Pancreas (tissue), 10 donors: ENCODE measurements at regions of chr10 and their contacts with region 1.

Region 1: DNA sequence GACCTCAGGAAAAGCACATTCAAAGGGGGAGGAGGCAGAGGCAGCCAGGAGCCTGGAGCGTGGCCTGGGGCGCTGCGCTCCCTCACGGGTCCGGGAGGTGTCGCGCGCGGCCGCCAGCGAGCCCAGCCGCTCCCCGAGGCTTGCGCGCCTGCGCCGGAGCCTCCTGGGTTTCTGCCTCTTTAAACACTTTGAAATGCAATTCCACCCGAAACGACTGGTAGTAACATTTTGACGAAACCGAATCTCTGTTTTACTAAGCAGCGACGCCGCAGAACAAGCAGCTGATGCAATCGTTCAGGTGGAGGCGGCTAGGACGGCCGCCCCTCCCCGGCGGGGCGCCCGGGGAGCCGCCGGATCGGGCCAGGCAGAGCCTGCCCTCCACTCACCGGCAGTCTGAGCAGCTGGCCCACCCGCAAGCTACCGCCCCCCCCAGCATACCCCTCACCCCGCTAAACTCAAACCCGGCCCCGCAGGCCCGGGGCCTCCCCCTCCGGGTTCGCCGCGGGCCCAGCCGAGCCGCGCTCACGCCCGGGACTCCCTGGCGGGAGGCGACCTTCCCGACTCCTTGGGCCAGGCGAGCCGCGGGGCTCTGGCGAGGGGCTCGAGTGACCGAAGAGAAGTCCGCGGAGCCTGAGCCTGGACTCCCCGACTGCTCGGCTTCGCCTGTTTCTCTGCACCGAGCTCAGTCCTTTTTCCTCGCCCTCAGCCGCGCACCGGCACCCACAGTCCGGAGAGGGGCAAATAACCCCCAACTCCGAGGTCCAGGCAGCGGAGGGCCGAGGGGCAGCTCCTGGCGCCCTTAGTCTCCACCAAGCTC is 3.2 kb downstream of the MKX start:
- DNase-seq: peak; percentile 72 to 93 (median 88)
- ATAC-seq: peak; percentile 91 to 95 (median 92)
- H3K4me3 ChIP-seq: peak overlapping the region; percentile 39 to 76 (median 55)
- H3K27ac ChIP-seq: peak overlapping the region in 2 of 4 donors; percentile 45 to 67
- H3K4me1 ChIP-seq: peaks cover 4 to 25% (median 8%) of the 10 kb centered on the region in 3 donors
- H3K27me3 ChIP-seq: peaks cover 4 to 30% (median 8%) of the 10 kb centered on the region in 4 donors
- CTCF ChIP-seq: peak; percentile 75 to 88 (median 80)

Region 2: GRCh38 chr10:27986821-27987220 is 244.4 kb after region 1 on chr10:
- intact Hi-C with region 1: no loop called
- DNase-seq: no peak
- ATAC-seq: no peak
- H3K4me3 ChIP-seq: no peak overlapping the region
- H3K27ac ChIP-seq: no peak overlapping the region
- H3K4me1 ChIP-seq: no peaks in the 10 kb centered on the region
- H3K27me3 ChIP-seq: no peaks in the 10 kb centered on the region
- CTCF ChIP-seq: no peak

Region 3: DNA sequence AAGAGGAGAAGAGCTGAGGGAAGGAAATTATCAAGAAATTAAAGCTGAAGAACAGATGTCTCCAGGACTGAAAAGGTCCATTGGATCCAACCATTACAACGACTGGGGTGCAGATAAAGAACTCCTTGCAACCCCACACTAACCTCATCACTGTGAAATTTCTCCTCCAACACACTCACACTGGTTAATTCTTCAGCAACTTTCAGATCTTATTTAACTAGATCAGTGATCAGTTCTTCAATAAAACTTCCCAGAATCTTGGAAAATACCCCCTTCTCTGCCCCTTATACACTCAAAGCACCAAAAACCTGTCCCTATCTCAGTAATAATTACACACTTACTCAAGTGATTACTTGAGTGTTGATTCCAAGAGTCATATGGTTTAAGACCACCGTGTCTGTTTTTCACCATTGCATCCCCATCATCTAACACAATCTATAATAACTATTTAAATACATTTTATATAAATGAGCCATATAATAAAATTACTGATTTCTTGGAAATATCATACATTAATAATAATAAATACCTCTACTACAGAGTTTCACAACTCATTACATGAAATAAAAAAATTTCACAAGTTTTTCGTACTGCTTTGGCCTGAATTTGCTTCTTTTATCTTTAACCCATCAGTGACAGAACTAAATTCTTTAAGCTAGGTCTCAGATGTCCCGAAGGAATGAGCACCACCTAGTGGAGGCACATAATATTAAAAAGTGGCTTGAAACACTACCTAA is 436.8 kb after region 1 on chr10:
- intact Hi-C with region 1: loop called in 1 of 3 experiments (anchors 10 kb)
- DNase-seq: peak in 1 of 6 donors; percentile 19
- ATAC-seq: peak in 3 of 4 donors; percentile 83 to 89 (median 85)
- H3K4me3 ChIP-seq: no peak overlapping the region
- H3K27ac ChIP-seq: no peak overlapping the region
- H3K4me1 ChIP-seq: peaks cover 0 to 7% (median 0%) of the 10 kb centered on the region in 3 donors
- H3K27me3 ChIP-seq: no peaks in the 10 kb centered on the region
- CTCF ChIP-seq: peak; percentile 30 to 63 (median 58)

Region 4: GRCh38 chr10:28241741-28242399 is 499.5 kb after region 1 on chr10:
- intact Hi-C with region 1: loop called in 1 of 3 experiments (anchors 5 kb)
- DNase-seq: peak in 1 of 6 donors; percentile 39
- ATAC-seq: peak; percentile 69 to 97 (median 94)
- H3K4me3 ChIP-seq: no peak overlapping the region
- H3K27ac ChIP-seq: no peak overlapping the region
- H3K4me1 ChIP-seq: peaks cover 0 to 3% (median 0%) of the 10 kb centered on the region in 3 donors
- H3K27me3 ChIP-seq: no peaks in the 10 kb centered on the region
- CTCF ChIP-seq: peak; percentile 55 to 86 (median 84)